Prostate gland (tissue), 2 donors: ENCODE measurements at regions of chr14 and their contacts with region 1.

Region 1: GRCh38 chr14:35121887-35122695 is at the starts of genes PPP2R3C and PRORP:
- DNase-seq: peak; percentile 97
- H3K4me3 ChIP-seq: peak within 1 kb of the TSS; percentile 59 to 61
- H3K27ac ChIP-seq: peak within 1 kb of the TSS; percentile 92 to 98
- H3K4me1 ChIP-seq: no peaks in the 10 kb centered on the region
- H3K27me3 ChIP-seq: no peaks in the 10 kb centered on the region
- CTCF ChIP-seq: no peak
- POLR2A ChIP-seq: peak; percentile 25
- total RNA-seq, gene PPP2R3C: 16.1 to 20.9 TPM
- total RNA-seq, gene PRORP: 19.7 to 27.9 TPM

Region 2: DNA sequence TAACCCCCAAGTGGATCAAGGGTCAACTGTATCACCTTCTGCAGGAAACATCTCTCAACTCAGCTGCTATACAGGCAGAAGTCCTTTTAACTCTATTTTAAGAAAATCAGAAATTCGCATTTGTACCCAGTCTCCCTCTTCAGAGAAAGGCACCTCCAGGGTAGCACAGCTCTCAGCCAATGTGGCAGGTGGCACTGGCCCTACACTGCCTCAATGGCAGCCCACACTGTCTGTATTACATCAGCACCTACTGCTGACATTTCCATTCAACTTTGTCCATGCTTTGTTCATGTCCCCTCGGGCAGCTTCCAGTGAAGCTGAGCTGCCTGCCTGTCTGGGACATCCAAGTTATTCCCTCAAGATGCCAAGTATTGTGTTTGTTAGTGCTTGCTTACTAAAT is 668.9 kb before region 1 on chr14:
- intact Hi-C with region 1: loop called (anchors 10 kb)
- DNase-seq: no peak
- H3K4me3 ChIP-seq: no peak overlapping the region
- H3K27ac ChIP-seq: no peak overlapping the region
- H3K4me1 ChIP-seq: no peaks in the 10 kb centered on the region
- H3K27me3 ChIP-seq: no peaks in the 10 kb centered on the region
- CTCF ChIP-seq: no peak
- POLR2A ChIP-seq: no peak

Region 3: DNA sequence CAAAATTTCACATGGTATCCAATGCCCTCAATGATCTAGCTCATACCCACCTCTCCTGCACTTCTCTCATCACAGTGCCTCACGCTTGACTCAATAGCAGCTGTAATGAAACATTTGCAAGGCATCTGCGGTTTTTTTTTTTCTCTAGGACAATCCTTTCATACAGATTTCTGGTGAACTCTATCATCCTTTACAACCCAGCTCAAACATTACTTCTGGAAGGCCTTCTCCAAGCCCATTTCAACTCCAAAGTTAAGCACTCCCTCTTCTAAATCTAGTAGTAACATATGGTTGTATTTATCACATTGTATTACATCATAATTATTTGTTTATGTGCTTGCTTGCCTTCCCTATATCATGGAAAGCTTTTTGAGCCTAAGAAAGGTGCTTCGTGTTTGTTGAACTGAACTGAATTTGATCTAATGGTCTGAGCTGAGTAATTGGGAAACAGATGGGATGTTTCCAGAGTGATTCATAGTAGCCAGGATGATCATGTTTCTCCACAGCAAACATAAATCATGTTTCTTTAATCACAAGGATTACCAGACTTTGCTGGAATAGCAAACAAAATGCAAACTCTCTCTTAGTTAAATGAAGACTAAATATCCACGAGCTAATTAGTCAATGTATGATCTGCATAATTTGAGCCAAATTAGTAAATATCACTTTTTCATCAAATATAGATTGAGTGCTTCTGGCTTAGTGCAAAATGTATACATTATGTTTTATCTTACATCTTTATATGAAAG is 422.0 kb before region 1 on chr14:
- intact Hi-C with region 1: loop called (anchors 10 kb)
- DNase-seq: no peak
- H3K4me3 ChIP-seq: no peak overlapping the region
- H3K27ac ChIP-seq: no peak overlapping the region
- H3K4me1 ChIP-seq: no peaks in the 10 kb centered on the region
- H3K27me3 ChIP-seq: no peaks in the 10 kb centered on the region
- CTCF ChIP-seq: no peak
- POLR2A ChIP-seq: no peak

Region 4: DNA sequence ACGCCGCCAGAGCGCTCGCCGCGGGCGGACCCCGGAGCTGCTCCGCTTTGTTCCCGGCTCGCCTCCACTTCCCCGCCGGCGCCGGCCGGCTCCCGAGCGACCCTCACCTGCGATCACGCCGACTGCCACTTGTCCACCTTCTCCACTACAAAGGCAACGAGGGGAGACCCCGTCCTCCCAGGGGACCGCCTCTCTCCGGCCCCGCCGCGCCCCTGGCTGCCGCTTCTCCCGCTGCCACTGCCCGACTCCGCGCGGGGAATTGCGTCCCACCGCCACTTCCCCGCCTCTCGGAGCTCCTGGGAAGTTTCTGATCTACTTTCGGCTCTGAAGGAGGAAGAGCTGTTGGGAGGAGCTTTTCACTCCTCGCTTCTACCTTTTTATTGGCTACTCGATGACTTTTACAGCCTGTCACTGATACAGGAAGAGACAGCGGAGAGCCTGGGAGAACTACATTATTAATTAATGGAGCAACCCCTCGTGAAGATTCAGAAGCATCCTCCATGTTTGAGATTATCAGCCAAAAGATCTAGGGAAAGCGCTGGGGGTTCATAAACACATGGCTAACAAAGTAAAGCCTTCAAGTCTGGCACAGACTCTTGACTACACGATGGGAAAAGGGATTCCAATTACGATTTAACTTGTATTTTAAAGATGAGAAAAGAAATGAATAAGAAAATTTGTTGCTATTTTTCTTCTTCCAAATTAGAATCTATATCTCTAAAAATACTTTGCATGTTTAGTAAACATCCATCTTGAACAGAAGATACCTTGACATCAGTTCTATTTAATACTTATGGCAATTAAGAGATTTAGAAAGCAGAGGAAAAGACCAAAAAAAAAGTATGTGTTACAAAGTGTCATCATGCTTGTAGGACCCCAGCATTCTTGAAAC is 246.8 kb before region 1 on chr14 and contains the start of gene BAZ1A:
- intact Hi-C with region 1: loop called (anchors 10 kb)
- DNase-seq: peak; percentile 78
- H3K4me3 ChIP-seq: peak within 1 kb of the TSS; percentile 73 to 80
- H3K27ac ChIP-seq: peak within 1 kb of the TSS; percentile 99 to 100
- H3K4me1 ChIP-seq: no peaks in the 10 kb centered on the region
- H3K27me3 ChIP-seq: no peaks in the 10 kb centered on the region
- CTCF ChIP-seq: peak in 2 of 4 experiments; percentile 30 to 42
- POLR2A ChIP-seq: peak; percentile 97
- total RNA-seq, gene BAZ1A: 25.3 to 31.5 TPM

Region 5: GRCh38 chr14:34982417-34983147 is 139.5 kb before region 1 on chr14 and contains the start of gene SRP54:
- intact Hi-C with region 1: loop called (anchors 2 kb)
- DNase-seq: peak; percentile 99
- H3K4me3 ChIP-seq: peak within 1 kb of the TSS; percentile 79 to 93
- H3K27ac ChIP-seq: peak within 1 kb of the TSS; percentile 93 to 99
- H3K4me1 ChIP-seq: no peaks in the 10 kb centered on the region
- H3K27me3 ChIP-seq: no peaks in the 10 kb centered on the region
- CTCF ChIP-seq: peak in 2 of 4 experiments; percentile 68 to 76
- POLR2A ChIP-seq: peak; percentile 99
- total RNA-seq, gene SRP54: 54.9 to 70.0 TPM

Region 6: DNA sequence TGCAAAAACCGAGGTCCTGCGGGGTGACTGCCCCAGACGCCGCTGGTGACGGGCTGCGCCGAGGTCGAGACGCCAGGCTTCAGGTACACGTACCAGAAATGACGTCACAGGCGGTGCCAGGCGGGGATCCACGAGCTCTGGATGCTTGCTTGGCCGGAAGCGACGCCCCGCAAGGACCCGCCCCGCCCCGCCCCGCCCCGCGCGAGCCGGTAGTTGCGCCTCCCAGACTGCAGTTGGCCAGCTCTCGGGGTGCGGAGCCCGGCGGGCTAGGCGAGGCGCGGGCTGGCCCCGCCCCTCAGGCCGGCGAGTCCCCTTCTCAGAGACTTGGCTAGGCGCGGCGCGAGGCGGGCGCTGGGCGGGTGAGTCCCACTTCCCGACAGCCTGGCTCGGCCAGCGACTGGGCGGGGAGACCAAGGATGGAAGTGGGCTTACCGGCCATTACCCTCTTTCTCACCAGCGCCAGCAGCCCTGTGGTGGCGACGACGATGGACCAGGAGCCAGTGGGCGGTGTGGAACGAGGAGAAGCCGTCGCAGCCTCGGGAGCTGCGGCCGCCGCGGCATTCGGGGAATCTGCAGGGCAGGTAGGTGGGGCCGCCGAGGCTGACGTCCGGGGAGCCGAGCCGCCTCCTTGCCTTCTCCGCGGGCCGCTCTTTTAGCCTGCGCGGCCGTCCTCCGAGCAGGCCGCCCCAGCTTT is 75.9 kb before region 1 on chr14 and contains the start of gene FAM177A1:
- intact Hi-C with region 1: loop called (anchors 5 kb)
- DNase-seq: peak; percentile 99
- H3K4me3 ChIP-seq: peak within 1 kb of the TSS; percentile 74 to 92
- H3K27ac ChIP-seq: peak within 1 kb of the TSS; percentile 98 to 100
- H3K4me1 ChIP-seq: no peaks in the 10 kb centered on the region
- H3K27me3 ChIP-seq: no peaks in the 10 kb centered on the region
- CTCF ChIP-seq: peak in 2 of 4 experiments; percentile 24 to 53
- POLR2A ChIP-seq: peak; percentile 96
- total RNA-seq, gene FAM177A1: 58.1 to 89.8 TPM